ENCODE measurements at regions of chr12 and their contacts with region 1.

Region 1: GRCh38 chr12:110613771-110614684 is at the start of gene TCTN1:
- DNase-seq: peak; percentile 100
- H3K4me3 ChIP-seq: peak within 1 kb of the TSS; percentile 70 to 93 (median 80)
- H3K27ac ChIP-seq: peak within 1 kb of the TSS; percentile 37 to 89 (median 85)
- H3K4me1 ChIP-seq: peaks cover 10 to 60% (median 19%) of the 10 kb centered on the region in 6 donors
- H3K27me3 ChIP-seq: no peaks in the 10 kb centered on the region
- CTCF ChIP-seq: peak in 5 of 11 experiments; percentile 4 to 54 (median 44)
- POLR2A ChIP-seq: peak in 1 of 3 donors; percentile 28
- total RNA-seq, gene TCTN1: 14.8 to 30.8 (median 24.5) TPM

Region 2: GRCh38 chr12:110449799-110450497 is 164.1 kb before region 1 on chr12 and contains the start of gene ARPC3:
- intact Hi-C with region 1: no loop called
- DNase-seq: peak; percentile 99
- H3K4me3 ChIP-seq: peak within 1 kb of the TSS; percentile 69 to 89 (median 78)
- H3K27ac ChIP-seq: peak within 1 kb of the TSS; percentile 94 to 98 (median 96)
- H3K4me1 ChIP-seq: peaks cover 27 to 76% (median 55%) of the 10 kb centered on the region in 6 donors
- H3K27me3 ChIP-seq: no peaks in the 10 kb centered on the region
- CTCF ChIP-seq: peak; percentile 82 to 99 (median 94)
- POLR2A ChIP-seq: peak; percentile 40 to 68 (median 60)
- total RNA-seq, gene ARPC3: 301 to 568 (median 353) TPM

Region 3: GRCh38 chr12:110661337-110661972 is 47.4 kb after region 1 on chr12:
- intact Hi-C with region 1: no loop called
- DNase-seq: peak; percentile 87
- H3K4me3 ChIP-seq: peak overlapping the region in 2 of 8 donors; percentile 23 to 50
- H3K27ac ChIP-seq: peak overlapping the region; percentile 23 to 87 (median 63)
- H3K4me1 ChIP-seq: peaks cover 0 to 79% (median 21%) of the 10 kb centered on the region in 6 donors
- H3K27me3 ChIP-seq: no peaks in the 10 kb centered on the region
- CTCF ChIP-seq: peak in 1 of 11 experiments; percentile 11
- POLR2A ChIP-seq: no peak

Region 4: DNA sequence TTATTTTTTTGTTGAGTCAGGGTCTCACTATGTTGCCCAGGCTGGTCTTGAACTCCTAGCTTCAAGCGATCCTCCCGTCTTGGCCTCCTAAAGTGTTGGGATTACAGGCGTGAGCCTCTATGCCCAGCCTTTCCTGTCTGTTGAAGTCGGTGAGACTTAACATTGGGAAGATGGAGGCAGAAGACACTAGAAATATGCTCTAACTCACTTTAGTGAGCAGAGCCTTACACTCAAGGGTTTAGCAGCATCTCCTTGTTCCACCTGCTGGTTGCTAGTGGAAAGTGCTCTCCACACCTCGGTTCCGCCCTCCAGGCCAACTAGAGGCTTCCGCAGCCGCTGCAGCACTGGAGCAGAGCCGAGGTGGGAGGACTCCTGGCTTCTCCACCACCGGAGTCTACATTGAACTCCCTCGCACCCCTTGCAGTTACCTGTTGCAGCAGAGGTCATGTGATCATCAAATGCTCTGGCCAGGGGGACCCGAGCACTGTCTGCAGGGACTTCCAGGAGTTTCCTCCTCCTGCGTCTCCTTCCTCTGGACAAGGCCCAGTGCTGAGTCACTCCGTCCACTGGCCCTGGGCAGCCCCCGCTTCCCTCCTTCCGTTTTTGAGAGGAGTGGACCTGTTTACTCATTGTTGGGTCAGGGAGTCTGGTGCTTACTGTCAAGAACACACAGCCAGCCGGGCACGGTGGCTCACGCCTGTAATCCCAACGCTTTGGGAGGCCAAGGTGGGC is 84.3 kb after region 1 on chr12:
- intact Hi-C with region 1: loop called (anchors 10 kb)
- DNase-seq: peak; percentile 92
- H3K4me3 ChIP-seq: peak overlapping the region in 5 of 8 donors; percentile 4 to 52 (median 18)
- H3K27ac ChIP-seq: peak overlapping the region in 7 of 8 donors; percentile 11 to 78 (median 47)
- H3K4me1 ChIP-seq: peaks cover 20 to 63% (median 35%) of the 10 kb centered on the region in 6 donors
- H3K27me3 ChIP-seq: no peaks in the 10 kb centered on the region
- CTCF ChIP-seq: peak; percentile 73 to 91 (median 84)
- POLR2A ChIP-seq: no peak

Measured in spleen (tissue), 13 donors.